ENCODE measurements at regions of chr15 and their contacts with region 1.

Region 1: GRCh38 chr15:30991255-30992072 is at the start of gene MTMR10:
- DNase-seq: peak; percentile 41 to 76
- ATAC-seq: peak; percentile 84 to 87
- H3K4me3 ChIP-seq: peak within 1 kb of the TSS; percentile 83 to 100 (median 92)
- H3K27ac ChIP-seq: peak within 1 kb of the TSS; percentile 94 to 99 (median 96)
- H3K4me1 ChIP-seq: peaks cover 45 to 52% of the 10 kb centered on the region in 2 donors
- H3K27me3 ChIP-seq: no peaks in the 10 kb centered on the region
- CTCF ChIP-seq: peak in 3 of 5 experiments; percentile 24 to 65 (median 56)
- POLR2A ChIP-seq: peak; percentile 95 to 96
- total RNA-seq, gene MTMR10: 36.6 to 63.4 (median 40.4) TPM

Region 2: GRCh38 chr15:30922480-30923311 is 68.8 kb before region 1 on chr15:
- in situ Hi-C with region 1: no loop called
- intact Hi-C with region 1: loop called (anchors 5 kb)
- DNase-seq: no peak
- ATAC-seq: peak in 1 of 2 donors; percentile 18
- H3K4me3 ChIP-seq: no peak overlapping the region
- H3K27ac ChIP-seq: peak overlapping the region; percentile 61 to 79 (median 78)
- H3K4me1 ChIP-seq: peaks cover 27 to 45% of the 10 kb centered on the region in 2 donors
- H3K27me3 ChIP-seq: no peaks in the 10 kb centered on the region
- CTCF ChIP-seq: no peak
- POLR2A ChIP-seq: no peak